Endothelial cell of umbilical vein (primary cell): ENCODE measurements at regions of chr1 and their contacts with region 1.

Region 1: DNA sequence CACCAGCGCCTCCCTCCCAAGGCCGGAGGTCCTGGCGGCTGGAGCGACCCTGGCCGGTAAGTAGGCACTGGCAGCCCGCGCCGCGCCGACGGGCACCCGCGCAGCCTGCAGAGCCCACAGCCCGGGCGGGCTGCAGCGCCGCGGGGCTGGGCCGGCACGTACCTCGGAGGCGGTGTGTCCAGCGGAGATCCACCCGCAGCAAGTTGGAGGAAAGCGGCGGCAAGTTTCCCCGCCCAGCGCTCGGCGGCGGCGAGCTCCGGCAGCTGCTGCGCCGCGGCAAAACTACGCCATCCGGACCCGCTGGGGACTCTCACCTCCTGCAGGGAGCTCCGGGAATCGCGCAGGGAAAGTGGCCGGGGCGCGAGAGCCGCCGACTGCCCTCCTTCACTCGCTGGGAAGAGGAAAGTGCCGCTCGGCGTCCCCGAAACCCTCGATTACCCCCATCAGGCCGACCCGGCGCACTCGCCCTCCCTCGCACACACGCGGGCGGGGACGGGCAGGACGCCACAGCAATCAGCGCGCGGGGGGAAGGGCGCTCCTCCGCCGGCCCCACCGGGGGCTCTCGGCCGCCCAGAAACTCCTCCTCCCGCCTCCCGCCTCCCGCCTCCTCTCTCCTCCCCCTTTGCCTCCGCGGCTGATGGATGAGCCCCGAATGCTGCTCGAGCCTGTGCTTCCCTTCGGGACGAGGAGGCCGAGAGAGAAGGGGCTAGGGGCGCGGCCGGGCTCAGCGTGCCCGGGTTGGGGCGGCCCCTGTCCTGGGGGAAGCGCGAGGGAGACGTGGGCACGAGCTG is at the start of gene TGFBR3:
- DNase-seq: peak; percentile 93
- H3K4me3 ChIP-seq: peak within 1 kb of the TSS; percentile 66 to 96 (median 88)
- H3K27ac ChIP-seq: peak within 1 kb of the TSS; percentile 71
- H3K4me1 ChIP-seq: peaks cover 14% of the 10 kb centered on the region
- H3K27me3 ChIP-seq: no peaks in the 10 kb centered on the region
- CTCF ChIP-seq: peak; percentile 34 to 59
- POLR2A ChIP-seq: peak; percentile 78
- total RNA-seq, gene TGFBR3: 10.5 and 13.4 TPM in 2 replicates

Region 2: GRCh38 chr1:91511386-91511785 is 374.5 kb before region 1 on chr1:
- CTCF ChIA-PET with region 1: interaction called, 86 read pairs
- POLR2A ChIA-PET with region 1: no interaction called
- dilution Hi-C with region 1: no loop called
- intact Hi-C with region 1: loop called (anchors 2 kb)
- DNase-seq: peak; percentile 57
- H3K4me3 ChIP-seq: no peak overlapping the region
- H3K27ac ChIP-seq: no peak overlapping the region
- H3K4me1 ChIP-seq: no peaks in the 10 kb centered on the region
- H3K27me3 ChIP-seq: no peaks in the 10 kb centered on the region
- CTCF ChIP-seq: peak; percentile 24 to 43
- POLR2A ChIP-seq: no peak

Region 3: GRCh38 chr1:91684481-91685196 is 201.3 kb before region 1 on chr1:
- CTCF ChIA-PET with region 1: interaction called, 7 read pairs
- POLR2A ChIA-PET with region 1: no interaction called
- dilution Hi-C with region 1: no loop called
- intact Hi-C with region 1: loop called (anchors 5 kb)
- DNase-seq: peak; percentile 66
- H3K4me3 ChIP-seq: no peak overlapping the region
- H3K27ac ChIP-seq: no peak overlapping the region
- H3K4me1 ChIP-seq: peaks cover 33% of the 10 kb centered on the region
- H3K27me3 ChIP-seq: no peaks in the 10 kb centered on the region
- CTCF ChIP-seq: no peak
- POLR2A ChIP-seq: no peak

Region 4: GRCh38 chr1:91804546-91805023 is 81.3 kb before region 1 on chr1:
- CTCF ChIA-PET with region 1: interaction called, 6 read pairs
- POLR2A ChIA-PET with region 1: no interaction called
- dilution Hi-C with region 1: no loop called
- intact Hi-C with region 1: loop called (anchors 5 kb)
- DNase-seq: no peak
- H3K4me3 ChIP-seq: no peak overlapping the region
- H3K27ac ChIP-seq: no peak overlapping the region
- H3K4me1 ChIP-seq: peaks cover 18% of the 10 kb centered on the region
- H3K27me3 ChIP-seq: no peaks in the 10 kb centered on the region
- CTCF ChIP-seq: no peak
- POLR2A ChIP-seq: no peak

Region 5: DNA sequence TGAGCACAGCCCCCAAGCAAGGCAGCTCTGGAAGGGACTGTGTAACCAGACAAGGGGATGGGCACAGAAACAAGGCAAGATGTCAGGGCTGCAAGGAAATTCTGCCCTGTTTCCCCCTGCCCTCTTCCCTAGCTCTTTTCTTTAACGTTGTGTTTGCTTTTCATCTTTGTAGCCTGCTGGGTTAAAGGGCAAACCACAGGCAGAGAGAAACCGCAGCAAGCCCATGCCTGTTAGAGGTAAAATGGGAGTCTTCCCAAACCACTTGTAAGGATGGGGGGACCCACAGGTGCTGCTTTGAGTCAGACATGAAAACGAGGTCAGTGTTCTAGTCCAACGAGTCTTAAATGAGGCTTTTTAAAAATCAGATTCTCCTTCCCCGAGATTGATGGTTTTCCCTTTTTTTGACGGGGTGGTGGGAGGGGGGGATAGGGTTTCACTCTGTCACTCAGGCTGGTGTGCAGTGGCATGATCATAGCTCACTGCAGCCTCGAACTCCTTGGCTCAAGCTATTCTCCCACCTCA is 13.3 kb before region 1 on chr1:
- CTCF ChIA-PET with region 1: interaction called, 14 read pairs
- POLR2A ChIA-PET with region 1: no interaction called
- dilution Hi-C with region 1: no loop called
- intact Hi-C with region 1: no loop called
- DNase-seq: no peak
- H3K4me3 ChIP-seq: no peak overlapping the region
- H3K27ac ChIP-seq: no peak overlapping the region
- H3K4me1 ChIP-seq: peaks cover 12% of the 10 kb centered on the region
- H3K27me3 ChIP-seq: no peaks in the 10 kb centered on the region
- CTCF ChIP-seq: no peak
- POLR2A ChIP-seq: no peak

Region 6: DNA sequence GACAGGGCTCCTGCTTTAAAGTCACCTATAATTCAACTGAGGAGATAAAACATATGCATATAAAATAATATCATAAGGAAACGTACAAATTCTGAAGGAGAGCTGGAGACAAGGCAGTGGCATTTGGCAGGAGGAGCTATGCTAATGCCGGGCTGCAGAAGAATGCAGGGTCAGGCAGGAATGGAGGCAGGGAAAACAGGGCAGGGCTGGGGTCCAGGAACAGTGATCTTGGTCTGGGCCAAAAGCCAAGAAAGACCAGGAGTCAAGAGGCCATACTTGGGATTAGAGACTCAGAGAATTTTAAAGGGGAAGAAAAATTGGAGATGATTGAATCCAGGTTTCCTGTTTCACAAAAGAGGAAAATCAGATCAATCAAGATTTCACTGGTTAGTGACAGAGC is 43.3 kb after region 1 on chr1:
- CTCF ChIA-PET with region 1: interaction called, 12 read pairs
- POLR2A ChIA-PET with region 1: interaction called, 4 read pairs
- dilution Hi-C with region 1: no loop called
- intact Hi-C with region 1: loop called (anchors 2 kb)
- DNase-seq: peak; percentile 53
- H3K4me3 ChIP-seq: no peak overlapping the region
- H3K27ac ChIP-seq: no peak overlapping the region
- H3K4me1 ChIP-seq: peaks cover 4% of the 10 kb centered on the region
- H3K27me3 ChIP-seq: no peaks in the 10 kb centered on the region
- CTCF ChIP-seq: no peak
- POLR2A ChIP-seq: no peak